Activated CD4-positive, alpha-beta T cell treated with anti-CD3 and anti-CD28 coated beads, Interleukin-2, amount 10 ng/mL, durations not matched to agents 7 days and 5 days (primary cell): ENCODE measurements at regions of chr1 and their contacts with region 1.

Region 1: GRCh38 chr1:151006327-151007052 is at the start of gene MINDY1:
- DNase-seq: peak; percentile 49
- H3K4me3 Mint-ChIP-seq: peak within 1 kb of the TSS; percentile 98
- H3K27ac Mint-ChIP-seq: peak within 1 kb of the TSS; percentile 94
- H3K4me1 Mint-ChIP-seq: peaks cover 90% of the 10 kb centered on the region
- H3K27me3 Mint-ChIP-seq: no peaks in the 10 kb centered on the region
- total RNA-seq, gene MINDY1: 23.9 to 24.3 TPM

Region 2: GRCh38 chr1:150352866-150353265 is 653.6 kb before region 1 on chr1:
- CTCF ChIA-PET with region 1: no interaction called
- POLR2A ChIA-PET with region 1: interaction called, 11 read pairs
- DNase-seq: no peak
- H3K4me3 Mint-ChIP-seq: no peak overlapping the region
- H3K27ac Mint-ChIP-seq: no peak overlapping the region
- H3K4me1 Mint-ChIP-seq: no peaks in the 10 kb centered on the region
- H3K27me3 Mint-ChIP-seq: no peaks in the 10 kb centered on the region

Region 3: DNA sequence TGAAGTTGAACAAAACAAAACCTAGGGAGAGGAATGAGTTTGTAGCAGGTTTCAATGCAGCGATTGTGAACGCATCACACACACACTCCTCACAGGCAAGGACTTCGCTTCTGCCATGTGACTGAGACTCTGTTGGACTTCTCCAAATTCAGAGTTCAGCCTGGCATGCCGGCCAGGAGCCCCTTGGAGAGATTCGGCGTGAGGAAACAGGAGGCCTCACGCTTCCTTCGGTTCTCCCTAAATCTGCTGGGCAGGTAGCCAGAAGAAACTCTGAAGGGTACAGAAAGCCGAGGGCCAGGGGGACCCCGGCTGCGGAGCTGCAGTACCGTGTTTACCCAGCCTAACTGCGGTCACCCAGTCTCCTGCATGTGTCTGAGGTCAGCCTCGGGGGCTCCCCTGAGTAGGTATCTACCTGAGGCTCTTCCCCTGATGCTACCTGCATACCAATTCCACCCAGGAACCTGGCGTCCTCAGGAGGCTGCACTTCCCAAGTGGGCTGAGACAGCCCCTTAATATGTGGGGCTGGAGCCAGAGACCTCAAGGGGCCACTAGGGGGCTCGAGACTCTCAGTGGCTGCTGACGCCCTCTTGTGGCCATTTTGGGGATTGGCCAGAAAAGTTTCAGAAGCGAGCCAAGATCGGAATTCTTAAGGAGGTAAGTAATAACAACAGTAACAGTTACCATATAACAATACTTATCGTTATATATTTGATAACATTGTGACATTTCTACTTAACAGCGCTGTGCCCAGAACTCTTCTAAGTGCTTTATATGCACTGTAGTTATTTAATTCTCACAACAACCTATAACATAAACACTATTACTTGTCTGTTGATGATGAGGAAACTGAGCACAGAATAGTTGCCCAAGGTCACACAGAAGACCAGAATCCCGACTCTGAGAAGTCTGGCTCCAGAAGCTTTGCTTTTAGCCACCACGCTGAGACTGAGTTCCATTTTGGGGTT is 27.1 kb before region 1 on chr1:
- CTCF ChIA-PET with region 1: interaction called, 26 read pairs
- POLR2A ChIA-PET with region 1: interaction called, 3 read pairs
- DNase-seq: peak; percentile 93
- H3K4me3 Mint-ChIP-seq: peak overlapping the region; percentile 19
- H3K27ac Mint-ChIP-seq: peak overlapping the region; percentile 54
- H3K4me1 Mint-ChIP-seq: peaks cover 42% of the 10 kb centered on the region
- H3K27me3 Mint-ChIP-seq: no peaks in the 10 kb centered on the region

Region 4: DNA sequence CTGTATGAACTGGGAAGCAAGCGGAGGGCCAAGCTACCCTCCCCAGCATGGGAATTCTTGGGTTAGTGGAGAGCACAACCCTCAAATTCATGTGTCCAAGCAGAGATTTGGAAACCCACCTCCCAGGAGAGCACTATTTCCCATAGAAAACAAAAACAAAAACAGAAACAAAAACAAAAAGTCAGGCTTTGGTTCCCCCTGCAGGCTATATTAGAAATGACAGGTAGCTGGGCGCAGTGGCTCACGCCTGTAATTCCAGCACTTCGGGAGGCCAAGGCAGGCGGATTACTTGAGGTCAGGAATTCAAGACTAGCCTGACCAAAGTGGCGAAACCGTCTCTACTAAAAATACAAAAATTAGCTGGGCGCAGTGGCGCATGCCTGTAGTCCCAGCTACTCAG is 10.6 kb before region 1 on chr1:
- CTCF ChIA-PET with region 1: interaction called, 41 read pairs
- POLR2A ChIA-PET with region 1: no interaction called
- DNase-seq: peak; percentile 46
- H3K4me3 Mint-ChIP-seq: no peak overlapping the region
- H3K27ac Mint-ChIP-seq: no peak overlapping the region
- H3K4me1 Mint-ChIP-seq: peaks cover 21% of the 10 kb centered on the region
- H3K27me3 Mint-ChIP-seq: no peaks in the 10 kb centered on the region

Region 5: GRCh38 chr1:151032164-151032563 is 25.7 kb after region 1 on chr1:
- CTCF ChIA-PET with region 1: no interaction called
- POLR2A ChIA-PET with region 1: no interaction called
- DNase-seq: no peak
- H3K4me3 Mint-ChIP-seq: no peak overlapping the region
- H3K27ac Mint-ChIP-seq: no peak overlapping the region
- H3K4me1 Mint-ChIP-seq: peaks cover 3% of the 10 kb centered on the region
- H3K27me3 Mint-ChIP-seq: no peaks in the 10 kb centered on the region